SK-N-SH (cell line): ENCODE measurements at regions of chr2 and their contacts with region 1.

Region 1: GRCh38 chr2:36367895-36368353 is 12.3 kb downstream of the CRIM1 start:
- DNase-seq: no peak
- H3K4me3 ChIP-seq: peak overlapping the region in 1 of 2 experiments; percentile 34; a peak in 3 of 4 replicates
- H3K27ac ChIP-seq: peak overlapping the region; percentile 86 to 96
- H3K4me1 ChIP-seq: peaks cover 5 to 86% of the 10 kb centered on the region in 2 experiments
- H3K27me3 ChIP-seq: no peaks in the 10 kb centered on the region
- CTCF ChIP-seq: no peak
- EP300 ChIP-seq: no peak
- RAD21 ChIP-seq: no peak

Region 2: GRCh38 chr2:36338817-36339125 is 29.2 kb before region 1 on chr2:
- CTCF ChIA-PET with region 1: no interaction called
- POLR2A ChIA-PET with region 1: no interaction called
- DNase-seq: no peak
- H3K4me3 ChIP-seq: no peak overlapping the region
- H3K27ac ChIP-seq: peak overlapping the region in 1 of 2 experiments; percentile 51; a peak in 3 of 4 replicates
- H3K4me1 ChIP-seq: peaks cover 0 to 28% of the 10 kb centered on the region in 2 experiments; a peak in 2 of 4 replicates
- H3K27me3 ChIP-seq: no peaks in the 10 kb centered on the region
- CTCF ChIP-seq: no peak
- EP300 ChIP-seq: peak in 1 of 2 experiments; percentile 89; a peak in 2 of 4 replicates
- RAD21 ChIP-seq: no peak

Region 3: GRCh38 chr2:36355151-36355889 is 12.6 kb before region 1 on chr2 and contains the start of gene CRIM1:
- CTCF ChIA-PET with region 1: interaction called, 14 read pairs
- POLR2A ChIA-PET with region 1: no interaction called
- DNase-seq: peak; percentile 82
- H3K4me3 ChIP-seq: peak within 1 kb of the TSS; percentile 80 to 91
- H3K27ac ChIP-seq: peak within 1 kb of the TSS; percentile 55 to 96
- H3K4me1 ChIP-seq: peaks cover 2 to 17% of the 10 kb centered on the region in 2 experiments
- H3K27me3 ChIP-seq: no peaks in the 10 kb centered on the region
- CTCF ChIP-seq: no peak
- EP300 ChIP-seq: peak in 1 of 2 experiments; percentile 12; a peak in 1 of 4 replicates
- RAD21 ChIP-seq: no peak
- polyA plus RNA-seq, gene CRIM1: 228 and 244 TPM in 2 replicates